ENCODE measurements at regions of chr14 and their contacts with region 1.

Region 1: GRCh38 chr14:97581016-97581415 is 783.8 kb downstream of the VRK1 start:
- DNase-seq: no peak
- ATAC-seq: no peak
- H3K4me3 ChIP-seq: no peak overlapping the region
- H3K27ac ChIP-seq: no peak overlapping the region
- H3K4me1 ChIP-seq: no peaks in the 10 kb centered on the region
- H3K27me3 ChIP-seq: no peaks in the 10 kb centered on the region
- CTCF ChIP-seq: no peak
- POLR2A ChIP-seq: no peak
- RAD21 ChIP-seq: no peak

Region 2: GRCh38 chr14:96320605-96321004 is 1260.4 kb before region 1 on chr14:
- CTCF ChIA-PET with region 1: no interaction called
- POLR2A ChIA-PET with region 1: no interaction called
- RAD21 ChIA-PET with region 1: no interaction called
- intact Hi-C with region 1: no loop called
- DNase-seq: no peak
- ATAC-seq: no peak
- H3K4me3 ChIP-seq: no peak overlapping the region
- H3K27ac ChIP-seq: no peak overlapping the region
- H3K4me1 ChIP-seq: no peaks in the 10 kb centered on the region
- H3K27me3 ChIP-seq: no peaks in the 10 kb centered on the region
- CTCF ChIP-seq: no peak
- POLR2A ChIP-seq: no peak
- RAD21 ChIP-seq: no peak

Region 3: GRCh38 chr14:97177015-97177414 is 404.0 kb before region 1 on chr14:
- CTCF ChIA-PET with region 1: no interaction called
- POLR2A ChIA-PET with region 1: no interaction called
- RAD21 ChIA-PET with region 1: interaction called in 1 of 2 experiments, 3 read pairs
- intact Hi-C with region 1: loop called (anchors 2 kb)
- DNase-seq: peak; percentile 69
- ATAC-seq: peak; percentile 69
- H3K4me3 ChIP-seq: no peak overlapping the region
- H3K27ac ChIP-seq: no peak overlapping the region
- H3K4me1 ChIP-seq: peaks cover 17 to 51% of the 10 kb centered on the region in 2 experiments
- H3K27me3 ChIP-seq: no peaks in the 10 kb centered on the region
- CTCF ChIP-seq: peak; percentile 53 to 66 (median 60)
- POLR2A ChIP-seq: no peak
- RAD21 ChIP-seq: peak; percentile 77

Region 4: GRCh38 chr14:97185186-97185585 is 395.8 kb before region 1 on chr14:
- CTCF ChIA-PET with region 1: no interaction called
- POLR2A ChIA-PET with region 1: no interaction called
- RAD21 ChIA-PET with region 1: no interaction called
- intact Hi-C with region 1: loop called (anchors 2 kb)
- DNase-seq: no peak
- ATAC-seq: peak; percentile 45
- H3K4me3 ChIP-seq: no peak overlapping the region
- H3K27ac ChIP-seq: no peak overlapping the region
- H3K4me1 ChIP-seq: peaks cover 8 to 16% of the 10 kb centered on the region in 2 experiments
- H3K27me3 ChIP-seq: no peaks in the 10 kb centered on the region
- CTCF ChIP-seq: peak; percentile 59 to 68 (median 61); a peak in 5 of 6 replicates
- POLR2A ChIP-seq: no peak
- RAD21 ChIP-seq: peak; percentile 79

Region 5: DNA sequence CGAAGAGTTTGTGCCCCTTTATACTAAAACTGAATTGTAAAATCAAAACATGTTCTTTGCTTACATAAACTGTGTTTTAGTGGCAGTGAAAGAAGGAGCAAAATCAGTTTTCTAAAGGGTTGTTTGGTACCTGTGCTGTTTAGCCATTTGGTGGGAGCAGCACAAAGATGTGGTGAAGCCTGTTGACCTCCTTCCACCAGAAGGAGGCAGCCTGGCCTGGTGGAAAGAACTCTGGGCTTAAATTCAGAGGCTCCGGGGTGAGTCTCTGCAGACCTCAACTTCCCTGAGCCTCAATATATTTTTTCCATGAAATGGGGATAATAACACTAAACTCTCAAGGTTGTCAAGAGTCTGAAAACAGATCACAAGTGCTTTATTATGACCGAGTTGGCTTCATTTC is 281.4 kb before region 1 on chr14:
- CTCF ChIA-PET with region 1: no interaction called
- POLR2A ChIA-PET with region 1: no interaction called
- RAD21 ChIA-PET with region 1: no interaction called
- intact Hi-C with region 1: loop called (anchors 10 kb)
- DNase-seq: no peak
- ATAC-seq: 0 out of 2 replicates have a peak, but pooled peaks have one; percentile 34
- H3K4me3 ChIP-seq: no peak overlapping the region
- H3K27ac ChIP-seq: no peak overlapping the region
- H3K4me1 ChIP-seq: no peaks in the 10 kb centered on the region
- H3K27me3 ChIP-seq: no peaks in the 10 kb centered on the region
- CTCF ChIP-seq: peak; percentile 21 to 43 (median 34); a peak in 5 of 6 replicates
- POLR2A ChIP-seq: no peak
- RAD21 ChIP-seq: peak; percentile 47

Region 6: DNA sequence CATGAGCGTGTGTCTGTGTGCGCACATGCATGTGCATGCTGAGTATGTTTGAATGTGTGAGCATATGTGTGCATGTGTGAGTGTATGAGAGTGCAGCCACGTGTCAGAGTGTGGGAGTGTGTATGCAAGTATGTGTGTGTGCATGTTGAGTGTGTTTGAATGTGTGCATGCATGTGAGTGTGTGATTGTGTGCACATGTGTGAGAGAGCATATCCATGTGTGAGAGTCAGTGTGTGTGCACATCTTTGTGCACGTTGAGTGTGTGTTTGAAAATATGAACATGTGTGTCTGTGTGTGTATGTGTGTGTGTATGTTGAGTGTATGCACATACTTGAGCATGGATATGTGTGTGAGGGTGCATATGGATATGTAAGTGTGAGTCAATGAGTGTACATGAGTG is 53.0 kb before region 1 on chr14:
- CTCF ChIA-PET with region 1: no interaction called
- POLR2A ChIA-PET with region 1: no interaction called
- RAD21 ChIA-PET with region 1: no interaction called
- intact Hi-C with region 1: no loop called
- DNase-seq: no peak
- ATAC-seq: no peak
- H3K4me3 ChIP-seq: no peak overlapping the region
- H3K27ac ChIP-seq: no peak overlapping the region
- H3K4me1 ChIP-seq: peaks cover 2 to 13% of the 10 kb centered on the region in 2 experiments; a peak in 2 of 4 replicates
- H3K27me3 ChIP-seq: no peaks in the 10 kb centered on the region
- CTCF ChIP-seq: no peak
- POLR2A ChIP-seq: no peak
- RAD21 ChIP-seq: no peak

Measured in HCT116 (cell line).